Esophagus squamous epithelium (tissue), 5 donors: ENCODE measurements at regions of chr2 and their contacts with region 1.

Region 1: GRCh38 chr2:74876081-74876886 is 42.4 kb downstream of the HK2 start:
- DNase-seq: no peak
- H3K4me3 ChIP-seq: no peak overlapping the region
- H3K27ac ChIP-seq: peak overlapping the region in 2 of 4 donors; percentile 44 to 75
- H3K4me1 ChIP-seq: peaks cover 0 to 20% (median 11%) of the 10 kb centered on the region in 3 donors
- H3K27me3 ChIP-seq: no peaks in the 10 kb centered on the region
- CTCF ChIP-seq: peak; percentile 68 to 80 (median 72)
- POLR2A ChIP-seq: no peak

Region 2: GRCh38 chr2:74714696-74715077 is 161.6 kb before region 1 on chr2:
- intact Hi-C with region 1: loop called (anchors 5 kb)
- DNase-seq: no peak
- H3K4me3 ChIP-seq: peak overlapping the region in 3 of 4 donors; percentile 44 to 75 (median 61)
- H3K27ac ChIP-seq: peak overlapping the region in 1 of 4 donors; percentile 85
- H3K4me1 ChIP-seq: peaks cover 0 to 39% (median 3%) of the 10 kb centered on the region in 3 donors
- H3K27me3 ChIP-seq: peaks cover 0 to 23% (median 0%) of the 10 kb centered on the region in 4 donors
- CTCF ChIP-seq: no peak
- POLR2A ChIP-seq: no peak